Activated CD8-positive, alpha-beta T cell treated with anti-CD3 and anti-CD28 coated beads for 36 hours (primary cell): ENCODE measurements at regions of chr17 and their contacts with region 1.

Region 1: DNA sequence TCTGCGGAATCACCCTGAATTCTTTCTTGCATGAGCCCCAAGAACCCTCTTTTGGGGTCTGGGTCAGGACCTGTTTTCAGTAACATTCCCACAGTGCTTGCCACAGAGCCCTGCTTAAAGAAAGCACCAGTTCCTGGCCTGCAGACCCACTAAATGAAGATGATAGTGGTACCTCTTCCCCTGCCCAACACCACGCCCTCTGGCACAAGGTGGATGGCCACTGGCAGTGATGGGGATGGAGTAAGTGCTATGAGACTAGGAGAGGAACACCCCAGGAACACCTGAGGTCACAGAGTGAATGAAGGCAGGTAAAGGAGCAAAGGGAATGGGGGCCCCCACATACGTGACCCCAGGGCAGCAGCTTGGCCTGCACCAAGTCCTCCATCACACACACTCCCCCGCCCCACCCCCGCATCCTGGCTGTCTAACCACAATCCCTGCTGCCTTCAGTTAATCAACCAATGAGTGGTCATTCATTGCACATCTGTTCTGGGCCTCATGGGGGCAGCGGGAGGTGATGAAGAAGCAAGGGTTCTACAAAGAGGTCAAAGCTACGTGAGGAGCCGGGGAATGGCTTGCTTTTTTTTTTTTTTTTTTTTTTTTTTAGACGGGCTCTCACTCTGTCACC is 3.9 kb upstream of the PPY start:
- DNase-seq: peak; percentile 37
- ATAC-seq: no peak
- H3K4me3 Mint-ChIP-seq: no peak overlapping the region
- H3K27ac Mint-ChIP-seq: no peak overlapping the region
- H3K4me1 Mint-ChIP-seq: peaks cover 3% of the 10 kb centered on the region
- H3K27me3 Mint-ChIP-seq: peaks cover 12% of the 10 kb centered on the region
- CTCF ChIP-seq: no peak

Region 2: DNA sequence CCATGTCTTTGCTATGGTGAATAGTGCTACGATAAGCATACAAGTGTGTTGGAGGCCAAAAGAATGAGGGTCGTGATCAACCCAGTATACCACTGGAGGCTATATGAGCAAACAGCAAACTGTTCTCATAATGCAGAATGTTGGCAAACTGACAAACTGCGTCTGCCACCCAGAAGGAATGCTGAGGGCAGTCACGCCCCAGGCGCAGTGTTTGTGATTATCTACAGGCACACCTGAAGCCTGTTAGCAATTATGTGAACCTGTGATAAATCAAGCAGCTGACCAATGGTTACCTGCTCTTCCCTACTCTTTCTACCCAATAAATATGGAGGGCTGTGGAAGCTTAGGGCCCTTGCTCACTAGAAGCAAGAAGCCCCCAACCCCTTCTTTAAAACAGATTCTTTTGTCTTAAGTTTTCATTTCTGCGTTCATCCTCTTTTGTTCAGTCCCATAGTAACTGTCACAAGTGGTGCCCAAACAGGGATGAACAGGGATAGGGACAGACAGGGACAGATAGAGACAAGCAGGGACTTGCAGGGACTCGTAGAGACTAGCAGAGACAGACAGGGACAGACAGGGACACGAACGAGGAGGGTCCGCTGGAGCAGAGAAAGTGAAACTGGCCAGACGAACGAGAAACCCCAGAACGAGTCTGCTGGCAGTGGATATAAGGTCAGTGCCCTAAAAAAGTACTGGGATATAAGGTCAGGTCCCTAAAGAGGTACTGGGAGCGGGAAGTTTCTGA is 74.1 kb before region 1 on chr17:
- CTCF ChIA-PET with region 1: no interaction called
- POLR2A ChIA-PET with region 1: no interaction called
- intact Hi-C with region 1: no loop called
- DNase-seq: no peak
- ATAC-seq: no peak
- H3K4me3 Mint-ChIP-seq: no peak overlapping the region
- H3K27ac Mint-ChIP-seq: no peak overlapping the region
- H3K4me1 Mint-ChIP-seq: no peaks in the 10 kb centered on the region
- H3K27me3 Mint-ChIP-seq: peaks cover 15% of the 10 kb centered on the region
- CTCF ChIP-seq: no peak

Region 3: GRCh38 chr17:43907425-43907981 is 38.7 kb before region 1 on chr17 and contains the start of gene MPP2:
- CTCF ChIA-PET with region 1: interaction called, 44 read pairs
- POLR2A ChIA-PET with region 1: interaction called, 3 read pairs
- intact Hi-C with region 1: no loop called
- DNase-seq: peak; percentile 80
- ATAC-seq: peak; percentile 64
- H3K4me3 Mint-ChIP-seq: peak within 1 kb of the TSS; percentile 77
- H3K27ac Mint-ChIP-seq: peak within 1 kb of the TSS; percentile 67
- H3K4me1 Mint-ChIP-seq: peaks cover 12% of the 10 kb centered on the region
- H3K27me3 Mint-ChIP-seq: peaks cover 11% of the 10 kb centered on the region
- CTCF ChIP-seq: no peak
- total RNA-seq, gene MPP2: 6.0 TPM

Region 4: GRCh38 chr17:43927060-43927864 is 18.9 kb before region 1 on chr17:
- CTCF ChIA-PET with region 1: interaction called, 20 read pairs
- POLR2A ChIA-PET with region 1: interaction called, 3 read pairs
- intact Hi-C with region 1: no loop called
- DNase-seq: peak; percentile 63
- ATAC-seq: peak; percentile 60
- H3K4me3 Mint-ChIP-seq: peak overlapping the region; percentile 70
- H3K27ac Mint-ChIP-seq: peak overlapping the region; percentile 69
- H3K4me1 Mint-ChIP-seq: peaks cover 26% of the 10 kb centered on the region
- H3K27me3 Mint-ChIP-seq: no peaks in the 10 kb centered on the region
- CTCF ChIP-seq: no peak

Region 5: GRCh38 chr17:43958953-43959352 is 12.8 kb after region 1 on chr17:
- CTCF ChIA-PET with region 1: interaction called, 43 read pairs
- POLR2A ChIA-PET with region 1: interaction called, 3 read pairs
- intact Hi-C with region 1: no loop called
- DNase-seq: no peak
- ATAC-seq: no peak
- H3K4me3 Mint-ChIP-seq: no peak overlapping the region
- H3K27ac Mint-ChIP-seq: no peak overlapping the region
- H3K4me1 Mint-ChIP-seq: no peaks in the 10 kb centered on the region
- H3K27me3 Mint-ChIP-seq: peaks cover 21% of the 10 kb centered on the region
- CTCF ChIP-seq: no peak

Region 6: DNA sequence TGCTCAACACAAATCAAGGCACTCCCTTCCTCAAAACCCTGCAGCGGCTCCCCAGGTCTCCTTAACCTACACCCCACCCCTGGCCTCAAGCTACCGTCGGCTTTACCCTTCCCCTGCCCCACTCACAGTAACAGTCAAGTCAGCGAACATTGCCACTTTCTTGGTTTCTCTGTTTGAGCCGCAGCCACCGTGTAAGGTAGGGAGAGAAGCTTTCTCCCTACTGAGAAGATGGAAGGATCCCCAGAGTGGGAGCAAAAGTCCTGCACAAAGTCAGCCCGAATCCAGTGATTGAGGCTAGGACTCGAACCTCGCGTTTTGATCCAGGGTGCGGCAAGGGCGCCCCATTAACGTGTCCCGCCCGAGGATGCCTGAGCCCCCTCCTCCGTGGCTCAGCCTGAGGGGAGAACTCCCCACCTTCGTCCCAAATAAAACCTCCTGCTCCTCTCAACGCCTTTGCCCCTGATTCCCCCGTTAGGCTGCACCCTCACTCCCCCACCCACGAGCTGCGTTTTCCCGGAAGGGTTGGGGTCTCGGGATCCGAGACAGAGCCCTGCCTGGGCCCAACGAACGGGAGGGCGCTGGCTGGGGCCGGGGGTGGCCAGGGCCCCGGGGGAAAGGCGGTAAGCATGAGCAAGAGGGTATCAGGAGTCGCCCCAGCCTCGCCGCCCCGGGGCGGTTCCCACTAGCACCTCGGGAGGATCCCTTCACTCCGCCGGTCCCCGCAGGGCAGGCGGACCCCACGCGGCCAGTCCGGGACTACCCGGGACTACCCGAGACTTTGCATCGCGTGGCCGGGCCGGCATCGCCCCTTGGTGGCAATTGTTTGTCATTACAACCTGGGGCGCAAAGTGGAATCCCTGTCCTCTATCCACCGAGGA is 48.3 kb after region 1 on chr17:
- CTCF ChIA-PET with region 1: interaction called, 62 read pairs
- POLR2A ChIA-PET with region 1: no interaction called
- intact Hi-C with region 1: loop called (anchors 2 kb)
- DNase-seq: peak; percentile 75
- ATAC-seq: peak; percentile 95
- H3K4me3 Mint-ChIP-seq: no peak overlapping the region
- H3K27ac Mint-ChIP-seq: no peak overlapping the region
- H3K4me1 Mint-ChIP-seq: no peaks in the 10 kb centered on the region
- H3K27me3 Mint-ChIP-seq: peaks cover 14% of the 10 kb centered on the region
- CTCF ChIP-seq: peak; percentile 95